HepG2 (cell line): ENCODE measurements at regions of chr18 and their contacts with region 1.

Region 1: GRCh38 chr18:79964330-79965118 is at the start of gene HSBP1L1:
- DNase-seq: peak; percentile 65
- ATAC-seq: peak; percentile 90
- H3K4me3 ChIP-seq: peak within 1 kb of the TSS; percentile 78 to 86 (median 85)
- H3K27ac ChIP-seq: peak within 1 kb of the TSS; percentile 91
- H3K4me1 ChIP-seq: peaks cover 66% of the 10 kb centered on the region
- H3K27me3 ChIP-seq: no peaks in the 10 kb centered on the region
- CTCF ChIP-seq: peak; percentile 54
- EP300 ChIP-seq: no peak
- POLR2A ChIP-seq: peak; percentile 56 to 83
- RAD21 ChIP-seq: peak; percentile 84
- total RNA-seq, gene HSBP1L1: 15.3 and 22.6 TPM in 2 replicates

Region 2: GRCh38 chr18:79771446-79772107 is 192.9 kb before region 1 on chr18:
- CTCF ChIA-PET with region 1: no interaction called
- POLR2A ChIA-PET with region 1: no interaction called
- in situ Hi-C with region 1: no loop called
- intact Hi-C with region 1: no loop called
- DNase-seq: no peak
- ATAC-seq: no peak
- H3K4me3 ChIP-seq: no peak overlapping the region
- H3K27ac ChIP-seq: no peak overlapping the region
- H3K4me1 ChIP-seq: no peaks in the 10 kb centered on the region
- H3K27me3 ChIP-seq: peaks cover 6 to 68% of the 10 kb centered on the region in 2 experiments; a peak in 4 of 5 replicates
- CTCF ChIP-seq: no peak
- EP300 ChIP-seq: no peak
- POLR2A ChIP-seq: no peak
- RAD21 ChIP-seq: no peak

Region 3: GRCh38 chr18:79951578-79952455 is 12.7 kb before region 1 on chr18 and contains the start of gene SLC66A2:
- CTCF ChIA-PET with region 1: no interaction called
- POLR2A ChIA-PET with region 1: interaction called, 20 read pairs
- in situ Hi-C with region 1: no loop called
- intact Hi-C with region 1: no loop called
- DNase-seq: peak; percentile 57
- ATAC-seq: peak; percentile 86
- H3K4me3 ChIP-seq: peak within 1 kb of the TSS; percentile 85 to 89 (median 88)
- H3K27ac ChIP-seq: peak within 1 kb of the TSS; percentile 55
- H3K4me1 ChIP-seq: peaks cover 54% of the 10 kb centered on the region
- H3K27me3 ChIP-seq: no peaks in the 10 kb centered on the region; a peak in 1 of 5 replicates
- CTCF ChIP-seq: no peak
- EP300 ChIP-seq: no peak
- POLR2A ChIP-seq: no peak
- RAD21 ChIP-seq: 0 out of 2 replicates have a peak, but pooled peaks have one; percentile 9
- total RNA-seq, gene SLC66A2: 30.3 and 41.9 TPM in 2 replicates

Region 4: GRCh38 chr18:79982734-79983133 is 18.2 kb after region 1 on chr18:
- CTCF ChIA-PET with region 1: no interaction called
- POLR2A ChIA-PET with region 1: interaction called, 13 read pairs
- in situ Hi-C with region 1: no loop called
- intact Hi-C with region 1: loop called (anchors 1 kb)
- DNase-seq: no peak
- ATAC-seq: peak; percentile 40
- H3K4me3 ChIP-seq: no peak overlapping the region
- H3K27ac ChIP-seq: no peak overlapping the region
- H3K4me1 ChIP-seq: peaks cover 67% of the 10 kb centered on the region
- H3K27me3 ChIP-seq: no peaks in the 10 kb centered on the region
- CTCF ChIP-seq: no peak
- EP300 ChIP-seq: no peak
- POLR2A ChIP-seq: no peak
- RAD21 ChIP-seq: no peak

Region 5: DNA sequence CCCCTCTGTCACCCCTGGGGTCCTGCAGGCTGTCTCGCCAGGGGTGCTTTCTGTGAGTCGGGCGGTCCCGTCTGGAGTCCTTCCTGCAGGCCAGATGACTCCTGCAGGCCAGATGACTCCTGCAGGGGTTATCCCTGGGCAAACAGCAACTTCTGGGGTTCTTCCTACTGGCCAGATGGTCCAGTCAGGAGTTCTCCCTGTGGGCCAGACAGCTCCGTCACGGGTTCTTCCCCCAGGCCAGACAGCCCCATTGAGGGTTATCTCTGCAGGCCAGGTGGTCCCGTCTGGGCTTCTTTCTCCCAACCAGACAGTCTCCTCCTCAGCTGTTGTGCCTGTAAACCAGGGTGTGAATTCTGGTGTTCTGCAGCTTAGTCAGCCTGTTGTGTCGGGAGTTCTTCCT is 172.2 kb after region 1 on chr18:
- CTCF ChIA-PET with region 1: no interaction called
- POLR2A ChIA-PET with region 1: no interaction called
- in situ Hi-C with region 1: no loop called
- intact Hi-C with region 1: loop called (anchors 1 kb)
- DNase-seq: no peak
- ATAC-seq: no peak; the same call in 1 of the 3 replicates
- H3K4me3 ChIP-seq: no peak overlapping the region
- H3K27ac ChIP-seq: no peak overlapping the region
- H3K4me1 ChIP-seq: no peaks in the 10 kb centered on the region
- H3K27me3 ChIP-seq: no peaks in the 10 kb centered on the region
- CTCF ChIP-seq: no peak
- EP300 ChIP-seq: no peak
- POLR2A ChIP-seq: no peak
- RAD21 ChIP-seq: no peak